ENCODE measurements at regions of chr6 and their contacts with region 1.

Region 1: GRCh38 chr6:109311471-109311870 is 70.8 kb downstream of the CD164 start:
- DNase-seq: no peak
- H3K4me3 ChIP-seq: no peak overlapping the region
- H3K27ac ChIP-seq: no peak overlapping the region
- H3K27me3 ChIP-seq: no peaks in the 10 kb centered on the region
- CTCF ChIP-seq: no peak

Region 2: DNA sequence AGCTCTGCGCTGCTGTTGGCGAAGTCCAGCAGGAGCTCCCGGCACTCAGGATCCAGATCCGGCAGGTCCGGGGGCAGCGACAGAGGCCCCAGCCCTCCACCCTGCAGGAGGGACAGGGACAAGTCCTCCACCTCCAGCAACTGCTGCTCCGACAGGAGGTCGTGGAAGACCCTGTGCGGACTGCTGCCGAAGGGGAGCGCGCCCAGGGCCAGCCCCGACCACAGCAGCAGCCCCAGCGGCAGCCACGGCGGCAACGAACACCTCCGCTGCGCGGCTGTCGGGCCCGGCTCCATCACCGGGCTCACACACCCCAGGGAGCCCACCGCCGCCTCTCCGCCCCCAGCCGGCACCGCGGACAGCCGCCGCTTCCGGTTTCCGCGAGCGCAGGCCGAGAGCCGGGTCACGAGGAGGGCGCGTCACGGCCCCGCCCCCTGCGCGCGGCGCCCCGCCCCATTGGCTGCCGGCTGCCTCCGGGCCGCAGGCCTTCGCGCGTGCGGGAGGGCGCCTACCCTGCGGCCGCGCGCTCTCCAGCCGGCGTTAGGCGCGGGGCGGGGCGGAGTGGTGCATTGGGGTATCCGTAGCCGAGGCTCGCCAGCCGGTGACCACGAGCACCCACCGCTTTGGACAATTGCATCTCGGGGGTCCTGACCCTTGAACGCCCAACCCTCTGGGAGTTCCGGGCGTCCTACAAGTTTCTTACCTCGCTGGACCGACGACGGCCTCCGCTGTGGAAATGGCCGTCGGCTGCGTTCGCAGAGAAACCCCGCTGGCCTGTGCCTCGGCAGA is 1236.9 kb before region 1 on chr6 and contains the start of gene OSTM1:
- intact Hi-C with region 1: no loop called
- DNase-seq: peak; percentile 76 to 96 (median 86)
- H3K4me3 ChIP-seq: peak within 1 kb of the TSS; percentile 59 to 100 (median 98)
- H3K27ac ChIP-seq: peak within 1 kb of the TSS; percentile 3 to 94 (median 85)
- H3K27me3 ChIP-seq: no peaks in the 10 kb centered on the region
- CTCF ChIP-seq: peak in 23 of 56 donors; percentile 3 to 64 (median 22)
- total RNA-seq, gene OSTM1: 19.6 to 54.7 (median 38.3) TPM

Region 3: DNA sequence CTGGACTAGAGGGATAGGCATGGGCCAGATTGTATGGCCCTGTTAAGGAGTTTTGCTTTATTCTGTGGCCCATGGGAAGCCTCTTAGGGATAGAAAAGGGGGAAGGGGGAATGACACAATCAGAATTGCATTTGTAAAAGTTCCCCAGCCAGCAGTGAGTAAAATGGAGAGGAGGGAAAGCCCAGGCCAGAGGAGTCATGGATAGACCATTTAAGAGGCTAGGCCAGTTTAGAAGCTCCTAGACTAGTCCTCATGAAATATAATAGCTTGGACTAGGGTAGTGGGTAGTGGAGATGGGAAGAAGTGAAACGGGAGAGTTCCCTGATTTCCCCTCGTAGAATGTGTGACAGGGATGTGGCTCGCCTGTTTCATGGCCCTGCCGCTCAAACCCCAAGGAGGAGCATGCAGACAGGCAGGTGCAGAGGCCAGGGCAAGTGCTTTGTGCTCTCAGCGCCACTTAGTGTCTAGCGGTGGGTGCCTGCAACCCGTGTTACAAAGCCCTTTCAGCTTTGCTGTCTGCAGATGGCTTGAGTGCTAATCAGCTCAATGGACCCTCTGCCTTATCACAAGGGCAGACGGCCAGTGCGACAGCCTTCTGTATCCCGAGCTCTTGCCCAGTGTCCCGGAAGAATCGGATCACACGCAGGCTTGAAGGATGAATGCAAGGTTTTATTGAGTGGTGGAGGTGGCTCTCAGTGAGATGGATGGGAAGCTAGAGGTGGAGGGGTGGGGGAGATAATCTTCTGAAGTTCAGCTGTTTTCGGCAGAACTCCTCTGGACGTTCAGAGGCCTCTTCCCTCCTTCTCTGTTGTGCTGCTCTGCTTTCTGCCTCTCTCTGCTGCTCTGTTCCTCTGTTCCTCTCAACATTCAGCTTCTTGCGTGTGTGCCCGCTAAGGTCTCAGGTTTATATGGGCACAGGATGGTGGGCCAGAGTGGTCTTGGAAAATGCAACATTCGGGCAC is 75.1 kb before region 1 on chr6:
- intact Hi-C with region 1: loop called in 1 of 2 experiments (anchors 5 kb)
- DNase-seq: peak in 9 of 10 donors; percentile 27 to 66 (median 53)
- H3K4me3 ChIP-seq: peak overlapping the region in 1 of 59 donors; percentile 3
- H3K27ac ChIP-seq: peak overlapping the region in 8 of 59 donors; percentile 7 to 35 (median 16)
- H3K27me3 ChIP-seq: no peaks in the 10 kb centered on the region
- CTCF ChIP-seq: peak in 40 of 56 donors; percentile 14 to 69 (median 40)

Measured in dorsolateral prefrontal cortex (tissue), 120 donors.